ENCODE measurements at regions of chr13 and their contacts with region 1.

Region 1: DNA sequence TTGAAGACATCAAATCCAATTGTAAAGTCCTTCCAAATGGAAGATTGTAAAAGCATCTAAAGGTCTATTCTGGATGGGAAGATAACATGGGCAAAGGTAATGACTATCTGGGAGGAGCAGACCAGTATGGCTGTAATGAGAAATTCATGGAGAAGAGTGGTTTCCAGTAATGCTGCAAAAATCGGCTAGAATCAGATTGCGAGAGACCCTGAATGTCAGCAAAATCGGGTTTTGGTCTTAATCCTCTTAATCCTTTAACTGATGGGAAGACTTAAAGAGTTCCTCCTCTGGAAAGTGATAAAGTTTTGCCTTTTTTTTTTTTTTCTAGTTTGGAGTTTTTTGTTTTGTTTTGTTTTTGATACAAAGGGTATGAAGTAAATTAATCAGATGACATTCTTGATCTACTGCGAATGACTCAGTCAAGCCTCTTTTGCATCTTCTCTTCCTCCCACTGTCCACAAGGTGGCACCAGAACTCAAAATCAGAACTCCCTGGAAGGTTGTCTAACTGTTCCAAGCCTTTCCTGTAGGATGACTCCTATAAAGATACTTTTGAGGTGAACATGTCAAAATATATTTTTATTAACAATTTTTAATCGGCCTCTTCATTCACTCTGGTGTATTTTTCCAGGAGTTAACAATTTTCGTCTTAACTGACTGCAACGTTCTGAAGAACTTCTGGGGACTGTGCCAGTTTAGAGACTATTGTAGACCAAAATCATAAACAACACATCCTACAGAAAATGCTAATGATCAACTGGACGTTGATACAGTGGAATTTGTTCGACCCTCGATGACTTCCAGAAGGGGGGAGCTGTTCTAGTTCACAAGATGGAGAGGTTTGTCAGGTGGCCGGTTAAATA is 213.3 kb upstream of the MIR17HG start:
- DNase-seq: peak in 4 of 5 donors; percentile 4 to 26 (median 15)
- H3K4me3 ChIP-seq: no peak overlapping the region
- H3K4me3 Mint-ChIP-seq: no peak overlapping the region
- H3K27ac ChIP-seq: no peak overlapping the region
- H3K27ac Mint-ChIP-seq: peak overlapping the region in 1 of 7 donors; percentile 6
- H3K4me1 ChIP-seq: no peaks in the 10 kb centered on the region
- H3K4me1 Mint-ChIP-seq: no peaks in the 10 kb centered on the region
- H3K27me3 ChIP-seq: no peaks in the 10 kb centered on the region
- H3K27me3 Mint-ChIP-seq: no peaks in the 10 kb centered on the region

Region 2: DNA sequence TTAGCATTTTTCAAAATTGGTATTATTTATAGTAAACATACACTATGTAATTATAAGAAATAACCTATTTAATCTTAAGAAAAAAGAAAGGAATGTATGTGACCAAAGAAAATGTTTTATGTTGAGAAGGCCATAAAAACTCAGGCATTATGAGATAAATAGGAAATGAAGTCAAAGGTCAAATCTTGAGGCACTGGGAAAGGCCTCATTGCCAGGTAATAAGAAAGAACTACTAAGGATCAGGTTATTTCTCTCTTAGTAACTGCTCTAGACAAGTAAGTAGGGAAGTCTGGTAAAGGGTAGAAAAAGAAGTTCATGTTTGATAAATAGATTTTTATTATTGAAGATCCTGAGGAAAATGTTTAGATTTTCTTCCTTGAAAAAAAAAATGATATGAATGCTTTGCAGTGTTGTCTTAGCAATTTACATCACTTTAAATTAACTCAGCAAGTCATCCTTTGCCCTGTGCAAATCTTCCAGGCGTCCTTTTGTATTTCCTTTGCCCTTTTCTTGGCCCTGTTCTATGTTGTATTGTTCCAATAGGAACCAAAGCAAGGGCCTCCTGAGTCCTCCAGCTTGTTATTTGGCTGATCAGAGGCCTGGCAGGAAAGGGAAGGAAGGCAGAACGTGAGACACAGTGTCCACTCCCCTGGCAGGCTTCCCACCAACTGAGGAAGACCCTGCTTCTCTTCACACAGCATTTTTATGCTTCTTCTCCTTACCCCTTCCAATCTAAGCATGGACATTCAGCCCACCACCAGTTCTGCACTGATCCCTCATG is 47.0 kb before region 1 on chr13:
- CTCF ChIA-PET with region 1: no interaction called
- POLR2A ChIA-PET with region 1: no interaction called
- intact Hi-C with region 1: no loop called
- DNase-seq: no peak
- H3K4me3 ChIP-seq: no peak overlapping the region
- H3K4me3 Mint-ChIP-seq: no peak overlapping the region
- H3K27ac ChIP-seq: no peak overlapping the region
- H3K27ac Mint-ChIP-seq: peak overlapping the region in 1 of 7 donors; percentile 21
- H3K4me1 ChIP-seq: no peaks in the 10 kb centered on the region
- H3K4me1 Mint-ChIP-seq: no peaks in the 10 kb centered on the region
- H3K27me3 ChIP-seq: no peaks in the 10 kb centered on the region
- H3K27me3 Mint-ChIP-seq: no peaks in the 10 kb centered on the region

Region 3: DNA sequence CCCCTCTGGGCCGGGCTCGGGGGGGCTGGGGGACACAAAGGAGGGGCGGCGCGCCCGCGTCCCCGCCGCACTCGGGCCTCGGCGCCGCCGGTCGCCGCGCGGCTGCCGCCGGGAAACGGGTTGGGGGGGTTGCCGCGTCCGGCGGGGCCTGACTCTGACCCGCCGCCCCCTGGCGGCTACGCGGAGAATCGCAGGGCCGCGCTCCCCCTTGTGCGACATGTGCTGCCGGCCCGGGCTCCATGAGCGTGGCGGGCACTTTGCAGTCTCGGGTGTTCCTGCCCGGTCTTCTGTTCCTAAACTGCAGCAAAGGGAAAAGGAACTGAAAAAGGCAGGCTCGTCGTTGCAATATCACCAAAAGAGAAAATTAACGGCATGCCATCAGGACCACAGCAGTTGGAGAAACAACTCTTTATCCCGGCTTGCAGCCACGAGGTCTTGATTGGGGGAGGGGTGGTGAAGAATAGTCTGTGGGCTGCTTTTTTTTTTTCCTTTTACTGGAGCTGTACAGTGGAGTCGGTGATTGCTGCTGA is 214.8 kb after region 1 on chr13:
- CTCF ChIA-PET with region 1: no interaction called
- POLR2A ChIA-PET with region 1: no interaction called
- intact Hi-C with region 1: loop called (anchors 2 kb)
- DNase-seq: peak; percentile 86 to 93 (median 88)
- H3K4me3 ChIP-seq: peak overlapping the region; percentile 39 to 74
- H3K4me3 Mint-ChIP-seq: peak overlapping the region; percentile 87 to 97 (median 92)
- H3K27ac ChIP-seq: peak overlapping the region; percentile 64
- H3K27ac Mint-ChIP-seq: peak overlapping the region; percentile 90 to 95 (median 93)
- H3K4me1 ChIP-seq: peaks cover 39% of the 10 kb centered on the region
- H3K4me1 Mint-ChIP-seq: peaks cover 20 to 45% (median 25%) of the 10 kb centered on the region in 4 donors
- H3K27me3 ChIP-seq: no peaks in the 10 kb centered on the region
- H3K27me3 Mint-ChIP-seq: peaks cover 0 to 4% of the 10 kb centered on the region in 2 donors

Region 4: DNA sequence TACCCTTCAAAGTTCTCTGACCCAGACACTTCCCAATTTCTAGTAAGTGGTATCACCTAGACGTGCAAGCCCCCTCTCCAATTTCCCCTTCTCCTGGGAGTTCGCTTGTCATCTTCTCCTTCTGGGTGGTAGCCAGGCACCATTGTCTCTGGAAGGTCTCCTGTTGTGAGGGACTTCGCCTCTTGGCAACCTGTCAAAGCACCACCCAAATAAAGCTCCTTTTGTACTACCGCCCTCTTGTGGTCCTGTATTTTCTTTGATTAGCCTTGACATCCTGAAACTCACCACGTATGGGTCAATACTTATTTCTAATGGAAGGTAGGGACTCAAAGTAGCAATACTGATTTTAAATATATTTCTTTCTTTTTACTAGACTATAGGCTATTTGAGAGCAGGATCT is 272.4 kb after region 1 on chr13:
- CTCF ChIA-PET with region 1: no interaction called
- POLR2A ChIA-PET with region 1: no interaction called
- intact Hi-C with region 1: loop called (anchors 2 kb)
- DNase-seq: peak; percentile 19 to 24 (median 22)
- H3K4me3 ChIP-seq: no peak overlapping the region
- H3K4me3 Mint-ChIP-seq: no peak overlapping the region
- H3K27ac ChIP-seq: no peak overlapping the region
- H3K27ac Mint-ChIP-seq: no peak overlapping the region
- H3K4me1 ChIP-seq: no peaks in the 10 kb centered on the region
- H3K4me1 Mint-ChIP-seq: peaks cover 0 to 2% (median 0%) of the 10 kb centered on the region in 4 donors
- H3K27me3 ChIP-seq: peaks cover 3% of the 10 kb centered on the region
- H3K27me3 Mint-ChIP-seq: peaks cover 10 to 15% of the 10 kb centered on the region in 2 donors

Region 5: GRCh38 chr13:91722267-91722884 is 588.2 kb after region 1 on chr13:
- CTCF ChIA-PET with region 1: no interaction called
- POLR2A ChIA-PET with region 1: no interaction called
- intact Hi-C with region 1: loop called (anchors 1 kb)
- DNase-seq: peak in 4 of 5 donors; percentile 1 to 15 (median 10)
- H3K4me3 ChIP-seq: no peak overlapping the region
- H3K4me3 Mint-ChIP-seq: no peak overlapping the region
- H3K27ac ChIP-seq: no peak overlapping the region
- H3K27ac Mint-ChIP-seq: no peak overlapping the region
- H3K4me1 ChIP-seq: no peaks in the 10 kb centered on the region
- H3K4me1 Mint-ChIP-seq: no peaks in the 10 kb centered on the region
- H3K27me3 ChIP-seq: no peaks in the 10 kb centered on the region
- H3K27me3 Mint-ChIP-seq: no peaks in the 10 kb centered on the region

Region 6: DNA sequence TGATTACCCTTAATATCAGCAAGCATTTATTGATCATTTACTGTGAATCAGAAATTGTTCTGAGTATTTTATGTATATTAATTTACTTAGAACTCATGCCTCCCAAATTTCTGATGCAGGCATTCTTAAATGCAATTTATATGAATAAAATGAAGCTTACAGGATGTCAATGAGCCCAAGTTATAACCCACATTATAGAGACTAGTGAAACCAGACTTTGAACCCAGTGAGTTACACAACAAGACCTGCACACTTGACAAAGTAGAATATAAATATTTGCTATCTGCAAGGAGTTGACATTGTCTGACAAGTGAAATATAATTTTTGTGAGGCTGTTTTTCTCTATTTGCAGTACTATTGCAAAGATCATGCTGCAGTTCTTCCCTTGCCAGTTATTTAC is 920.2 kb after region 1 on chr13:
- CTCF ChIA-PET with region 1: no interaction called
- POLR2A ChIA-PET with region 1: no interaction called
- intact Hi-C with region 1: no loop called
- DNase-seq: no peak
- H3K4me3 ChIP-seq: no peak overlapping the region
- H3K4me3 Mint-ChIP-seq: no peak overlapping the region
- H3K27ac ChIP-seq: no peak overlapping the region
- H3K27ac Mint-ChIP-seq: no peak overlapping the region
- H3K4me1 ChIP-seq: no peaks in the 10 kb centered on the region
- H3K4me1 Mint-ChIP-seq: no peaks in the 10 kb centered on the region
- H3K27me3 ChIP-seq: no peaks in the 10 kb centered on the region
- H3K27me3 Mint-ChIP-seq: no peaks in the 10 kb centered on the region

Measured in CD4-positive, alpha-beta memory T cell (primary cell).